Endothelial cell of umbilical vein (primary cell): ENCODE measurements at regions of chr11 and their contacts with region 1.

Region 1: GRCh38 chr11:14454861-14455632 is 44.6 kb downstream of the COPB1 start:
- DNase-seq: peak; percentile 68
- H3K4me3 ChIP-seq: no peak overlapping the region
- H3K27ac ChIP-seq: no peak overlapping the region
- H3K4me1 ChIP-seq: peaks cover 2% of the 10 kb centered on the region
- H3K27me3 ChIP-seq: no peaks in the 10 kb centered on the region
- CTCF ChIP-seq: peak; percentile 43 to 51
- POLR2A ChIP-seq: peak; percentile 23

Region 2: DNA sequence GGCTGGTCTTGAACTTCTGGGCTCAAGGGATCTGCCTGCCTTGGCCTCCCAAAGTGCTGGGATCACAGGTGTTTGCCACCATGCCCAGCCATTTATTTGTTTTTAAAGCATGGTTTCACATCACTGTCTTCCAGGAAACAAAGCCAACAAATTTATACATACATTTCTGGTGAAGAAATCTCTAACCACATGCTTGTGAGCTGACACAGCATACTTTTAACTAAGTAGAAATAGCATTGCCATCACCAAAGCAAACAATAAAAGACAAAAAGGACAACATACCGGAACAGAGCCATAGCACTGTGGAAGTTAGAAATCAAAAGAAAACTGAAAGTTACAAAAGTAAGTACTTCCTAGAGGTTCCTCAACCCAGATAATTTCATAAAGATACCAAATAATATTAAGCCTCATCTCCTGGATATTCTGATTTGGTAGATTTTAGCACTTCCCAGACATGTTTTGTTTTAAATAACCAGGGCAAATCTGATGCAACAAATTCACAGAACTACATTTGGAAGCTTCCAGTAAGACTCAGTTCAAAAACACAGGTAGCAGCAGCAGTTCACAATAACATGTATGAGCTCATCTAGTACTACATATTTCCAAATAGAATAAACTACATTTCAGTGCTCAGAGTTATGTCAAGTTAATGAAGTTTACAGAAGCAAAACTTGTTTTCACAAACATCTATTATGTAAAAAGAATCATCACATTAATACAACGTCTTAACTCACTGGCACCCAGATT is 166.7 kb before region 1 on chr11:
- CTCF ChIA-PET with region 1: interaction called, 17 read pairs
- POLR2A ChIA-PET with region 1: no interaction called
- dilution Hi-C with region 1: loop called (anchors 25 kb)
- intact Hi-C with region 1: no loop called
- DNase-seq: no peak
- H3K4me3 ChIP-seq: no peak overlapping the region
- H3K27ac ChIP-seq: no peak overlapping the region
- H3K4me1 ChIP-seq: no peaks in the 10 kb centered on the region
- H3K27me3 ChIP-seq: no peaks in the 10 kb centered on the region
- CTCF ChIP-seq: no peak
- POLR2A ChIP-seq: no peak

Region 3: GRCh38 chr11:14308114-14308896 is 146.7 kb before region 1 on chr11:
- CTCF ChIA-PET with region 1: interaction called, 514 read pairs
- POLR2A ChIA-PET with region 1: interaction called, 8 read pairs
- dilution Hi-C with region 1: no loop called
- intact Hi-C with region 1: no loop called
- DNase-seq: peak; percentile 53
- H3K4me3 ChIP-seq: no peak overlapping the region
- H3K27ac ChIP-seq: no peak overlapping the region
- H3K4me1 ChIP-seq: peaks cover 4% of the 10 kb centered on the region
- H3K27me3 ChIP-seq: no peaks in the 10 kb centered on the region
- CTCF ChIP-seq: peak; percentile 42 to 62
- POLR2A ChIP-seq: no peak

Region 4: GRCh38 chr11:14358729-14359439 is 96.2 kb before region 1 on chr11 and contains the start of gene RRAS2:
- CTCF ChIA-PET with region 1: interaction called, 40 read pairs
- POLR2A ChIA-PET with region 1: interaction called, 5 read pairs
- dilution Hi-C with region 1: no loop called
- intact Hi-C with region 1: loop called (anchors 1 kb)
- DNase-seq: peak; percentile 77
- H3K4me3 ChIP-seq: peak within 1 kb of the TSS; percentile 57 to 84 (median 75)
- H3K27ac ChIP-seq: peak within 1 kb of the TSS; percentile 46
- H3K4me1 ChIP-seq: peaks cover 9% of the 10 kb centered on the region
- H3K27me3 ChIP-seq: no peaks in the 10 kb centered on the region
- CTCF ChIP-seq: no peak
- POLR2A ChIP-seq: peak; percentile 85
- total RNA-seq, gene RRAS2: 80.5 and 84.4 TPM in 2 replicates

Region 5: GRCh38 chr11:14422052-14422813 is 32.8 kb before region 1 on chr11:
- CTCF ChIA-PET with region 1: interaction called, 48 read pairs
- POLR2A ChIA-PET with region 1: interaction called, 4 read pairs
- dilution Hi-C with region 1: no loop called
- intact Hi-C with region 1: no loop called
- DNase-seq: peak; percentile 98
- H3K4me3 ChIP-seq: no peak overlapping the region
- H3K27ac ChIP-seq: peak overlapping the region; percentile 69
- H3K4me1 ChIP-seq: peaks cover 44% of the 10 kb centered on the region
- H3K27me3 ChIP-seq: no peaks in the 10 kb centered on the region
- CTCF ChIP-seq: no peak
- POLR2A ChIP-seq: peak; percentile 69

Region 6: GRCh38 chr11:14443638-14444037 is 11.4 kb before region 1 on chr11:
- CTCF ChIA-PET with region 1: interaction called, 11 read pairs
- POLR2A ChIA-PET with region 1: no interaction called
- dilution Hi-C with region 1: no loop called
- intact Hi-C with region 1: no loop called
- DNase-seq: no peak
- H3K4me3 ChIP-seq: no peak overlapping the region
- H3K27ac ChIP-seq: no peak overlapping the region
- H3K4me1 ChIP-seq: peaks cover 29% of the 10 kb centered on the region
- H3K27me3 ChIP-seq: no peaks in the 10 kb centered on the region
- CTCF ChIP-seq: no peak
- POLR2A ChIP-seq: no peak

Region 7: GRCh38 chr11:14499554-14500180 is 44.6 kb after region 1 on chr11 and contains the start of gene COPB1:
- CTCF ChIA-PET with region 1: interaction called, 3 read pairs
- POLR2A ChIA-PET with region 1: no interaction called
- dilution Hi-C with region 1: no loop called
- intact Hi-C with region 1: loop called (anchors 2 kb)
- DNase-seq: peak; percentile 94
- H3K4me3 ChIP-seq: peak within 1 kb of the TSS; percentile 62 to 95 (median 95)
- H3K27ac ChIP-seq: peak within 1 kb of the TSS; percentile 82
- H3K4me1 ChIP-seq: peaks cover 20% of the 10 kb centered on the region
- H3K27me3 ChIP-seq: no peaks in the 10 kb centered on the region
- CTCF ChIP-seq: no peak
- POLR2A ChIP-seq: peak; percentile 97
- total RNA-seq, gene COPB1: 145 and 146 TPM in 2 replicates